Calu3 (cell line): ENCODE measurements at regions of chr3 and their contacts with region 1.

Region 1: DNA sequence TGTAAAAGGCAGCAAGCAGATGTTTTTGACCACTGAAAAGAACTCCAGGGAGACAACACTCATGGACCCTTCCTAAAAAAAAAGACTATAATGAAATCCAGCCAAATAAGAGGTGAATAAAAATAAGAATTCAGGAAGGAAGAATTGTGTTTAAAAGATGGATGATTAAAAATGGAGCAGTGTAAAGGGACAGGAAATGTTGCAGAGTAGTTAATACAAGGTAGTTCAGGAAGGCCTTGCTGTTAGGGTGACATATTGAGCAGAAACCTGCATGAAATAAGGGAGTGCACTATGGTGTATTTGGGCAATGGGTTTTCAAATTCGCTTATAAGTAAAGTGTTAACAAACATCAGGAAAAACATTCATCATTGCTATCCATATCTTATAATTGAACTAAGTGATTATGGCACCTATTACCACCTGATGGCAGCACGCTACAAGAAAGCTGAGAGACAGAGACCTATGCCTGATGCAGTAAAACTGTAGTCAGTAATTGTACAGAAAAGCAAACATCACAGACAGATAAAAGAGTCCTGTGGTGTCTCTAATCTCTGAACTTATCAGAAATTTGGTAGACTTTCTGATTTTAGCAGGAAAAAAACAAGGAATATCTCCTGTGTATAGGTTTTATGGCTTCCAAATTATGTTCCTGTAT is 5.8 kb upstream of the DBR1 start:
- DNase-seq: peak; percentile 51
- H3K4me3 Mint-ChIP-seq: no peak overlapping the region
- H3K27ac Mint-ChIP-seq: no peak overlapping the region
- H3K4me1 Mint-ChIP-seq: peaks cover 20% of the 10 kb centered on the region
- H3K27me3 Mint-ChIP-seq: no peaks in the 10 kb centered on the region
- CTCF ChIP-seq: peak; percentile 47

Region 2: DNA sequence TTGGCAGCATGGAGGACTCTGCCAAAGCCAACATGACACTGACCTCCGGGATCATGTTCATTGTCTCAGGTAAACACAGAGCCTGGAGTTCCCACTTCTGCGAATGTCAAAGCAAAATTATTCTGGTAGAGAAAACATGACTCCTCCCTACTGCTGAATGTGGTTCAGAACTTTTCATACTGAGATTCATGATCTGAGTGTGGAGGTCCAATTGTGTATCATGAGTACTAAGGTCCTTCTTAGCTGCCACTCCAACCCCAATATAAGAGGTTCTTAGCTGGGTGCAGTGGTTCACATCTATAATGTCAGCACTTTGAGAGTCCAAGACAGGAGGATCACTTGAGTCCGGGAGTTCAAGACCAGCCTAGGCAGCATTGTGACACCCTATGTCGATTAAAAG is 156.7 kb before region 1 on chr3:
- CTCF ChIA-PET with region 1: no interaction called
- intact Hi-C with region 1: no loop called
- DNase-seq: no peak
- H3K4me3 Mint-ChIP-seq: no peak overlapping the region
- H3K27ac Mint-ChIP-seq: no peak overlapping the region
- H3K4me1 Mint-ChIP-seq: no peaks in the 10 kb centered on the region
- H3K27me3 Mint-ChIP-seq: no peaks in the 10 kb centered on the region
- CTCF ChIP-seq: no peak

Region 3: DNA sequence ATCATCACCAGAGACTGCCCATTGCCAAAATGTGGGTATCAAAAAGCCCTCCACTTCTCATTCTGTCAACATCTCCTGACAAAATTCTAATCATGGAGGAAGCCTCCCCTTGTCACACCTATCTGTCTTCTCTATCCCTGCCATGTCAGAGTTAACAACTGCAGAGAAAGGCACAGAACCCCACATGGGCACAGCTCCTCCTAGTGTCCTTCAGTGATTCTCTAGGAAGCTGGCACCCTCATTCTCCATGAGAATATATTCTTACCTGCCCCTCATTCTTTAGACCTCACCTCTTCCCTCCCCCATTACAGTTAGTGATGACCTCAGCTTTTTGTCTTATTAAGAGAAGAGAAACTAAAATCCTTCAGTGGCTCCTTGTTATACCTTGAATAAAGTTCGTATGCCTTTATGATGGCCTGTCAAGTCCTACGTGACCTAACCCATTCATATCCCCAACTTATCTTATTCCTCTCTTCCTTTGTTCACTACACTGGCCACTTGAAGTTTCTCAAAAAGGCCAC is 104.5 kb after region 1 on chr3:
- CTCF ChIA-PET with region 1: no interaction called
- intact Hi-C with region 1: loop called (anchors 1 kb)
- DNase-seq: no peak
- H3K4me3 Mint-ChIP-seq: no peak overlapping the region
- H3K27ac Mint-ChIP-seq: no peak overlapping the region
- H3K4me1 Mint-ChIP-seq: no peaks in the 10 kb centered on the region
- H3K27me3 Mint-ChIP-seq: no peaks in the 10 kb centered on the region
- CTCF ChIP-seq: no peak

Region 4: GRCh38 chr3:138397983-138398382 is 217.5 kb after region 1 on chr3:
- CTCF ChIA-PET with region 1: no interaction called
- intact Hi-C with region 1: loop called (anchors 1 kb)
- DNase-seq: no peak
- H3K4me3 Mint-ChIP-seq: no peak overlapping the region
- H3K27ac Mint-ChIP-seq: no peak overlapping the region
- H3K4me1 Mint-ChIP-seq: no peaks in the 10 kb centered on the region
- H3K27me3 Mint-ChIP-seq: peaks cover 30% of the 10 kb centered on the region
- CTCF ChIP-seq: no peak

Region 5: GRCh38 chr3:139477710-139478640 is 1297.5 kb after region 1 on chr3:
- CTCF ChIA-PET with region 1: no interaction called
- intact Hi-C with region 1: no loop called
- DNase-seq: no peak
- H3K4me3 Mint-ChIP-seq: no peak overlapping the region
- H3K27ac Mint-ChIP-seq: no peak overlapping the region
- H3K4me1 Mint-ChIP-seq: peaks cover 32% of the 10 kb centered on the region
- H3K27me3 Mint-ChIP-seq: no peaks in the 10 kb centered on the region
- CTCF ChIP-seq: no peak